Naive thymus-derived CD4-positive, alpha-beta T cell (primary cell): ENCODE measurements at regions of chr17 and their contacts with region 1.

Region 1: GRCh38 chr17:30906101-30906911 is at the start of gene TEFM:
- DNase-seq: peak; percentile 71 to 86 (median 80)
- ATAC-seq: peak; percentile 98
- H3K4me3 ChIP-seq: peak within 1 kb of the TSS; percentile 96
- H3K4me3 Mint-ChIP-seq: peak within 1 kb of the TSS; percentile 88 to 99 (median 92)
- H3K27ac ChIP-seq: peak within 1 kb of the TSS; percentile 88
- H3K27ac Mint-ChIP-seq: peak within 1 kb of the TSS; percentile 77 to 99 (median 92)
- H3K4me1 ChIP-seq: peaks cover 9 to 13% of the 10 kb centered on the region in 2 donors
- H3K4me1 Mint-ChIP-seq: peaks cover 33 to 65% (median 56%) of the 10 kb centered on the region in 7 donors
- H3K27me3 ChIP-seq: no peaks in the 10 kb centered on the region
- H3K27me3 Mint-ChIP-seq: no peaks in the 10 kb centered on the region
- total RNA-seq, gene TEFM: 8.5 to 22.1 (median 16.5) TPM

Region 2: GRCh38 chr17:30378824-30379302 is 527.4 kb before region 1 on chr17 and contains the start of gene CPD:
- CTCF ChIA-PET with region 1: no interaction called
- POLR2A ChIA-PET with region 1: no interaction called
- intact Hi-C with region 1: loop called in 1 of 2 experiments (anchors 1 kb)
- DNase-seq: peak; percentile 93 to 99 (median 97)
- ATAC-seq: peak; percentile 98
- H3K4me3 ChIP-seq: peak within 1 kb of the TSS; percentile 76
- H3K4me3 Mint-ChIP-seq: peak within 1 kb of the TSS; percentile 90 to 99 (median 94)
- H3K27ac ChIP-seq: peak within 1 kb of the TSS; percentile 81
- H3K27ac Mint-ChIP-seq: peak within 1 kb of the TSS; percentile 89 to 98 (median 94)
- H3K4me1 ChIP-seq: peaks cover 20 to 50% of the 10 kb centered on the region in 2 donors
- H3K4me1 Mint-ChIP-seq: peaks cover 36 to 65% (median 55%) of the 10 kb centered on the region in 7 donors
- H3K27me3 ChIP-seq: no peaks in the 10 kb centered on the region
- H3K27me3 Mint-ChIP-seq: no peaks in the 10 kb centered on the region
- total RNA-seq, gene CPD: 16.5 to 52.9 (median 22.6) TPM

Region 3: DNA sequence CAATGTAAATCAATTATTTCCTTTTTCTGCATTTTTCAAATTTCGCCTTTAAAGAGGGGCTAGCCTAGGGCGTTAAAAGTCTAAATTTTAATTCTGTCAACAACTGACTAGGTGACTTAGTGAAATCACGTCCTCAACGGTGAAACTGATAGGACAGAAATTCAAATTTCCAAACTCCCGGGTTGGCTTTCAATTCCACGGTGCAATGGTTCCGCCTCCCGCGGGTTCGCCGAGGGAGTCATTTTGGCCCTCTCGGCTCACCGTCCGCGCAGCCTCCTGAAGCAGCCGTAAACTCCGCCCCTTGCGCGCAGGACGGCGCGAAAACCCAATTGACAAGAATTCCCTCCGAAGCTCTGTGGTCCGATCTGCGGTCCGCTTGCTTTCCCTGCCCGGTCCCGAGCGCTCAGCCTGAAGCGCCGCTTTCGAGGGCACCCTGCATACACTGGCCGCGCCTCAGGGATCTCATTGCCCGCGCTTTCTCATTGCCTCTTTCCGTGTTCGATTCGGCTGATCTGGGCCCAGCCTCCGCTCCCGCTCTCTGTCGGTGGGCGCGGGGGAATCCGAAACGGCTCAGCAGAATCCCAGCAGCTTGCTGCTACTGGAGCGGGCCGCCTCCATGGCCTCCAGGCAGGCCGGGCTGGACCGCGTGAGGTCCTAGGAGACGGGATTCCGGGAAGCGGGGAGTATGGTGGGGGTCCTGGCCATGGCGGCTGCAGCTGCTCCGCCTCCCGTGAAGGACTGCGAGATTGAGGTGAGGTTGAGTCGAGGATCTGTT is 74.5 kb before region 1 on chr17 and contains the start of gene ATAD5:
- CTCF ChIA-PET with region 1: no interaction called
- POLR2A ChIA-PET with region 1: no interaction called
- intact Hi-C with region 1: loop called in 1 of 2 experiments (anchors 5 kb)
- DNase-seq: peak; percentile 73 to 90 (median 87)
- ATAC-seq: peak; percentile 99
- H3K4me3 ChIP-seq: peak within 1 kb of the TSS; percentile 81
- H3K4me3 Mint-ChIP-seq: peak within 1 kb of the TSS; percentile 92 to 100 (median 96)
- H3K27ac ChIP-seq: peak within 1 kb of the TSS; percentile 75
- H3K27ac Mint-ChIP-seq: peak within 1 kb of the TSS; percentile 83 to 98 (median 92)
- H3K4me1 ChIP-seq: peaks cover 12 to 17% of the 10 kb centered on the region in 2 donors
- H3K4me1 Mint-ChIP-seq: peaks cover 14 to 40% (median 26%) of the 10 kb centered on the region in 7 donors
- H3K27me3 ChIP-seq: no peaks in the 10 kb centered on the region
- H3K27me3 Mint-ChIP-seq: no peaks in the 10 kb centered on the region
- total RNA-seq, gene ATAD5: 3.5 to 22.1 (median 5.0) TPM

Region 4: GRCh38 chr17:30921544-30922196 is 15.4 kb after region 1 on chr17 and contains the start of gene ADAP2:
- CTCF ChIA-PET with region 1: no interaction called
- POLR2A ChIA-PET with region 1: no interaction called
- intact Hi-C with region 1: no loop called
- DNase-seq: peak in 1 of 9 donors; percentile 13
- ATAC-seq: peak; percentile 77
- H3K4me3 ChIP-seq: no peak within 1 kb of the TSS
- H3K4me3 Mint-ChIP-seq: peak within 1 kb of the TSS; percentile 67 to 93 (median 74)
- H3K27ac ChIP-seq: no peak within 1 kb of the TSS
- H3K27ac Mint-ChIP-seq: peak within 1 kb of the TSS in 1 of 9 donors; percentile 31
- H3K4me1 ChIP-seq: no peaks in the 10 kb centered on the region
- H3K4me1 Mint-ChIP-seq: peaks cover 7 to 18% (median 14%) of the 10 kb centered on the region in 7 donors
- H3K27me3 ChIP-seq: peaks cover 0 to 3% of the 10 kb centered on the region in 2 donors
- H3K27me3 Mint-ChIP-seq: peaks cover 34 to 65% (median 51%) of the 10 kb centered on the region in 5 donors
- total RNA-seq, gene ADAP2: 2.6 to 18.9 (median 4.9) TPM

Region 5: GRCh38 chr17:30970831-30971567 is 64.7 kb after region 1 on chr17 and contains the start of gene RNF135:
- CTCF ChIA-PET with region 1: interaction called, 4 read pairs
- POLR2A ChIA-PET with region 1: no interaction called
- intact Hi-C with region 1: loop called in 1 of 2 experiments (anchors 2 kb)
- DNase-seq: peak; percentile 13 to 72 (median 47)
- ATAC-seq: peak; percentile 76
- H3K4me3 ChIP-seq: peak within 1 kb of the TSS; percentile 76
- H3K4me3 Mint-ChIP-seq: peak within 1 kb of the TSS; percentile 88 to 99 (median 96)
- H3K27ac ChIP-seq: peak within 1 kb of the TSS; percentile 59
- H3K27ac Mint-ChIP-seq: peak within 1 kb of the TSS; percentile 71 to 98 (median 76)
- H3K4me1 ChIP-seq: peaks cover 3% of the 10 kb centered on the region in 2 donors
- H3K4me1 Mint-ChIP-seq: peaks cover 15 to 42% (median 25%) of the 10 kb centered on the region in 7 donors
- H3K27me3 ChIP-seq: no peaks in the 10 kb centered on the region
- H3K27me3 Mint-ChIP-seq: peaks cover 0 to 6% (median 0%) of the 10 kb centered on the region in 5 donors
- total RNA-seq, gene RNF135: 3.4 to 18.7 (median 3.6) TPM

Region 6: DNA sequence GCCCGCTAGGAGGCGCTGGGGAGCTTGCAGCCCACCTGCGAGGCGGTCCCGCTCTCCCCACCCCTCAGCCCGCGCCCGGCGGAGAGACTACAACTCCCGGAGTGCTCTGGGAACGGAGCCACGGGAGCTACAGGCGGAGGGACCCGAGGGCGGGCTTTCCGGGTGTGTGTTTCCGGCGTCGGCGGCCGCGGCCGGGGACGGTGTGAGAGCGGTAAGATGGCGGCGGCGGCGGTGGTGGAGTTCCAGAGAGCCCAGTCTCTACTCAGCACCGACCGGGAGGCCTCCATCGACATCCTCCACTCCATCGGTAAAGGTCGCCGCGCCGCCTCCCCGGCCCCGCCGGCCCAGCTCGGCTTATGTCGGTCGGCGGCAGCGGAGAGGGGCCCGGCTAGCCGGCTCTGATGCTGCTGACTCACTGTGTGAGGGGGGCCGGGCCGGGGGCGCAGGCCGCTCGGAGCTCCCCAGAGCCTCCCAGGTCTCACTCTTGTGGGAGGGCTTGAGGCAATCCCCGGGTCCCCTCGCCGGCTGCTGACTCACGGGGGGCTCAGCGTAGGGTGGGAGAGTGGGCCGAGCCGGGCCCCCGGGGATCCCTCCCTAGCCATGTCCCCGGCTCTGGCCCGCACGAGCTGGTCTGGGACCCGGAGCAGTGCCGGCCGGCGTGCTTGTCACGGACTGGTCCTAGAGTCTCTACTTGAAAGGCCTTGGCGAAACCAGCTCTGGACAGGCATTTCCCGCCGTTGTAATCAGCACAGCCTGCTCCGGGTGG is 1538.2 kb after region 1 on chr17 and contains the start of gene PSMD11:
- CTCF ChIA-PET with region 1: no interaction called
- POLR2A ChIA-PET with region 1: no interaction called
- intact Hi-C with region 1: loop called in 1 of 2 experiments (anchors 5 kb)
- DNase-seq: peak; percentile 98 to 100 (median 99)
- ATAC-seq: peak; percentile 99
- H3K4me3 ChIP-seq: peak within 1 kb of the TSS; percentile 80
- H3K4me3 Mint-ChIP-seq: peak within 1 kb of the TSS; percentile 78 to 93 (median 86)
- H3K27ac ChIP-seq: peak within 1 kb of the TSS; percentile 94
- H3K27ac Mint-ChIP-seq: peak within 1 kb of the TSS; percentile 52 to 83 (median 78)
- H3K4me1 ChIP-seq: peaks cover 13 to 14% of the 10 kb centered on the region in 2 donors
- H3K4me1 Mint-ChIP-seq: peaks cover 25 to 46% (median 36%) of the 10 kb centered on the region in 7 donors
- H3K27me3 ChIP-seq: no peaks in the 10 kb centered on the region
- H3K27me3 Mint-ChIP-seq: peaks cover 0 to 23% (median 0%) of the 10 kb centered on the region in 5 donors
- total RNA-seq, gene PSMD11: 60.1 to 112 (median 67.5) TPM